Activated CD8-positive, alpha-beta T cell treated with anti-CD3 and anti-CD28 coated beads, Interleukin-2, amount 10 ng/mL, durations not matched to agents 7 days and 5 days (primary cell): ENCODE measurements at regions of chr2 and their contacts with region 1.

Region 1: GRCh38 chr2:43559391-43560230 is 36.2 kb downstream of the THADA start:
- DNase-seq: no peak
- ATAC-seq: peak; percentile 49
- H3K4me3 Mint-ChIP-seq: no peak overlapping the region
- H3K27ac Mint-ChIP-seq: peak overlapping the region; percentile 79
- H3K4me1 Mint-ChIP-seq: peaks cover 52% of the 10 kb centered on the region
- H3K27me3 Mint-ChIP-seq: no peaks in the 10 kb centered on the region

Region 2: DNA sequence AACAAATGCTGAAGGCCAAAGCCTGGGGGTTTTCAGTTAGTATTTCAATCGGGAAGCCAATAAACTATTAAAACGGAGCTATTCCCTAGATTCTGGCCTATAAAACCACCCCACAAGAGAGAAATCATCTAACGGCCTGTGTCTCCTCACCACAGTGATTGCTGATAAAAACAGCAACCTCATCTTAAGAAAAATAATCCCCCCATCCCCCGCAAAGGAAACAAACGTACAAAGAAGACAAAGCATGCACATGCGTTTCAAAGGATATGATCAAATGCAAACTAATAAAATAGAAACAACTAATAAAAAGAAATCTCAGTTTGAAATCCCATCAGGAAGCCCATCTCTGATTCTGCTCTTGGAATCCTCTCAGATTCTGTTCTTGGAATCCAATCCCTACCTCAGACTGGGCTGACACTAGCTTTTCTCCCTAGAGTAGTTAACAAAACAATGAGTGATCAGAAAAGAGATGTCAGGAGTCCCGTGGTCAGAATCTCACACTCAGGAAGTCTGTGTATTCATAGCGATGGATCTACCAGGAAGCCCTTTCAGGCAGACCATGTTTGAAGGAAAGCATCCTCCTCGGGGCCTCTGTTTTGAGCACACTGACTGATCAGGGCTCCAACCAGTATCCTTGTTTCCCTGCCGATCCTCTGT is 114.5 kb before region 1 on chr2:
- CTCF ChIA-PET with region 1: no interaction called
- POLR2A ChIA-PET with region 1: no interaction called
- DNase-seq: no peak
- ATAC-seq: no peak
- H3K4me3 Mint-ChIP-seq: no peak overlapping the region
- H3K27ac Mint-ChIP-seq: no peak overlapping the region
- H3K4me1 Mint-ChIP-seq: peaks cover 7% of the 10 kb centered on the region
- H3K27me3 Mint-ChIP-seq: no peaks in the 10 kb centered on the region

Region 3: DNA sequence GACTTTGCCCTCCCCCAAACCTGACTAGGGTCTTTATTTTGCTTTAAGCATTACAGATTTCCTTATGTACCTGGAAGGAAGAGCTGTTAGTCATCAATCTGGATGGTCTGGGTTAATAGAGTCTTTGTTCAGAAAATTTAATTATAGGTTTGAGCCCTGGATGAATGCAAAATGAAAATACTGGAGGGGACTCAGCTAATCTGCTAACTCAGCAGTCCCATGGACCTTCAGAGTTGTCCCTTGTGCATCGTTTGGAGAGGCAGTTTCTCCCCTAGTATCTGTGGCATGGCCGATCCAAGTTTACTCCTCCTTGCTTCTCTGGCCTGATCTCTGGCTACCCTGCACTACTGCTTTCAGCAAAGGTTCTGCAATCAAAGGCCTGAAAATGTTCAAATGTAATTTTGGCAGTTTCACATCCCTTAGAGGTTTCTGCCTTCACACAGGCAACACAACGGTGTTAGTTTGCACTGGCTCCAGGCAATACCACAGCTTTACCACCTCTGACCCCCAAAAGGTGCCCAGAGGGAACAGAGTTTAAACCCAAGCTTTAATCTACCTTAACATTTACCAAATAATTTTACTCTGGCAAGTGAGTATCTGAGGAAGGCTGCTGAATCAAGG is 98.0 kb before region 1 on chr2:
- CTCF ChIA-PET with region 1: no interaction called
- POLR2A ChIA-PET with region 1: no interaction called
- DNase-seq: no peak
- ATAC-seq: no peak
- H3K4me3 Mint-ChIP-seq: no peak overlapping the region
- H3K27ac Mint-ChIP-seq: no peak overlapping the region
- H3K4me1 Mint-ChIP-seq: peaks cover 20% of the 10 kb centered on the region
- H3K27me3 Mint-ChIP-seq: no peaks in the 10 kb centered on the region

Region 4: DNA sequence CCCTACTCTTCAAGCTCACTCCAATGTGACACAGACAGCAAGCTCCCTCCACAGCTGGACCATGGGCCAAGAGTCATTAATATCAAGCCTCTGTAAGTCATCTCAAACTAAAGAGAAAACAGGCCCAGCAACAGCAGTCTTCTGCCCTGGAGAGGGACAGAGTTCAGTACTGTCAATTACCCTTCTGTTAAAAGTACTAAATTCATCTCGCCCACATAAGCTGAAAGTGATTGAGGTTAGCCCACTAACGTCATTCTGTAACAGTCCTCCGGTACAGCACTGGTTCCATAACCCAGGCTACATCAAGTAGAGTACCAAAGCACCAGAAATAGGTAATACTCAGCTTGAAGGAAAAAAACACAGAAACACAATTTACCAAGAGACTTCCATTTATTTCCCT is 10.3 kb after region 1 on chr2:
- CTCF ChIA-PET with region 1: interaction called, 14 read pairs
- POLR2A ChIA-PET with region 1: interaction called, 3 read pairs
- DNase-seq: peak; percentile 34
- ATAC-seq: peak; percentile 79
- H3K4me3 Mint-ChIP-seq: no peak overlapping the region
- H3K27ac Mint-ChIP-seq: peak overlapping the region; percentile 66
- H3K4me1 Mint-ChIP-seq: peaks cover 44% of the 10 kb centered on the region
- H3K27me3 Mint-ChIP-seq: no peaks in the 10 kb centered on the region

Region 5: GRCh38 chr2:43576981-43577892 is 17.6 kb after region 1 on chr2:
- CTCF ChIA-PET with region 1: interaction called, 63 read pairs
- POLR2A ChIA-PET with region 1: interaction called, 3 read pairs
- DNase-seq: peak; percentile 43
- ATAC-seq: no peak
- H3K4me3 Mint-ChIP-seq: no peak overlapping the region
- H3K27ac Mint-ChIP-seq: no peak overlapping the region
- H3K4me1 Mint-ChIP-seq: peaks cover 14% of the 10 kb centered on the region
- H3K27me3 Mint-ChIP-seq: no peaks in the 10 kb centered on the region